Activated T-helper 2 cell treated with anti-CD3 and anti-CD28 coated beads, Interferon-gamma antibody, Interleukin-2, Interleukin-4, amounts not matched to agents 10 μg/mL and 5 μg/mL and 100 μg/mL, durations not matched to agents 14 hours and 24 hours and 36 hours (primary cell): ENCODE measurements at regions of chr9 and their contacts with region 1.

Region 1: GRCh38 chr9:93159601-93160471 is 24.1 kb upstream of the WNK2 start:
- DNase-seq: peak; percentile 60
- H3K4me3 Mint-ChIP-seq: no peak overlapping the region
- H3K27ac Mint-ChIP-seq: peak overlapping the region; percentile 53
- H3K4me1 Mint-ChIP-seq: peaks cover 22% of the 10 kb centered on the region
- H3K27me3 Mint-ChIP-seq: no peaks in the 10 kb centered on the region

Region 2: DNA sequence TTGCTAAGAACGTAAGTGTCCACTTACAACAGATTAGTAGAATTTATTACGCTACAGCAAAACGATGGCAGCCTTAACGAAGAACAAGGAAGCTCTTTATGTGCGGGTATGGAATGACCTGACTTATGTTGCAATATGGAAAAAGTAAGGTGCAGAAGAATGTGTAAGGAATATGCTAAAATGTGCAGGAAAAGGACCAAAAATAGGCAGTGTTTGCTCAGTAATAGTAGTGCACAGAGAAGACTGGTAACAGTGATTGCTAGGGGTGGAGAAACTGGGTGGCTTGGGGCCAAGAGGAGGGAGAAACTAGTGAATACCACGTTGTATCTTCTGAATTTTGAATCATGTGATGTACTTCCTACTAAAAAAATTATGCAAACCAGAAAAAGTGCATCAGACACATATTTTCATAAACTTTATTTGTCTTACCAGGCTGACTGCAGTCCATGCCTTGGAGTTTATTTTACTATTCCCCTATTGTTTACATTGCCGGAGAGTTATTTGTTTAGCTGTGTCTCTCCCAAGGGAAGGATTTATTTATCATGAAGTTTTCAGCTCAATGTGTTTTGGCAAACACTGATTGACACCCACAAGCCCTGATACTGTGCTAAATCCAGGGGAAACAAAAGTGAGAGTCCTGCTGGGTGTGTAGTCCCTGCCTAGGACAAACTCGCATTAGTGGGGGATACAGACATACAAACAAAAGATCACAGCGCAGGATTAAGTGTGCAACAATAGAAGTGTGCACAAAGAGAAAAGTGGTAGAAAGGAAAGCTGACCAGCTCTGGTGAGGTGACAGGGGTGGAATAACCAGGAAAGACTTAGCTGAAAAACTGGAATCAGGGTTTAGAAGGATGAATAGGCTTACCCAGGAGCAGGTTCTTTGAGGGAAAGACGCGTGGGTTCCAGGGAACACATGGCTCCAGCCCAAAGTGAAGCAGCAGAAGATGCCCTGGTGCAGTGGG is 248.0 kb before region 1 on chr9:
- intact Hi-C with region 1: no loop called
- DNase-seq: no peak
- H3K4me3 Mint-ChIP-seq: no peak overlapping the region
- H3K27ac Mint-ChIP-seq: no peak overlapping the region
- H3K4me1 Mint-ChIP-seq: no peaks in the 10 kb centered on the region
- H3K27me3 Mint-ChIP-seq: peaks cover 31% of the 10 kb centered on the region

Region 3: GRCh38 chr9:93302551-93303257 is 142.9 kb after region 1 on chr9:
- intact Hi-C with region 1: loop called (anchors 2 kb)
- DNase-seq: peak; percentile 29
- H3K4me3 Mint-ChIP-seq: no peak overlapping the region
- H3K27ac Mint-ChIP-seq: no peak overlapping the region
- H3K4me1 Mint-ChIP-seq: no peaks in the 10 kb centered on the region
- H3K27me3 Mint-ChIP-seq: no peaks in the 10 kb centered on the region

Region 4: DNA sequence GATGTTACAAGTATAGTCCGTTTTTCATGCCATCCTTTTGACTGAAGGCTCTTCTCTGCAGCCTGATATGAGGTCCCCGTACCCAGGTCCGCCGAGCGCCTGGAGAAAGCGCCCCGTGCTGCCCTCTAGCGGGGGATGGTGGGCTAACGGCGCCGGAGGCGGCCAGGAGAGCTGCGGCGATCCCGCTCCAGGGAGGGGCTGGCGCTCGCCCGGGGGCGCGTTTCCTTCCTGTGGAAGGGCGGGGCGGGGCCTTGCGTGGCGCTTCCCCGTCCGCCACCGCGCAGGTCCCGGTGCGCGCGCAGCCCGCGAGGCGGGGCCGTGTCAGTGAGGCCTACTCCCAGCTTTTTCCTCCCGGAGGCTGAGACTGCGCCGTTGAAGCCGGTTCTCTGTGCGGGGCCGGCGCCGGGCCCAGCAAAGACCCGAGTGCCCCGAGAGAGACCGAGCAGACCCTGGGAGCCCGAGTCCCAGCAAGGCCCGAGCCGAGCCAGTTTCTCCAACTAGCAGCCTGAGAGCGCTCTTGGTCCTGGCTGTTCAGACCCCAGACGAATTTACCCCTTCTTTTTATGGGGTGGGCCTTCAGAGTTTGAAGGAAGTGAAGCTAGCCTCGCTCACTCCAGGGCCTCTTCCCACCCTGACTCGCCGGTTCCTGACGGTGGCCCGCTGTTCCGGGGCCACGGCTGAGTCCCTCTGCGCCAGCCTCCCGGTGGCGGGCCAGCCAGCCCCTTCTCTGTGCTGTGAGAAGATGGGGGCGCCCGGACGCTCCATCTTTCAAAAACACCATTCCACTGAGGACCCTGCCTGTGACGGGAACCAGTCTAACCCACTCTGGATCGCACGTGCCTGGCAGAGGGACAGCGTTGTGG is 406.8 kb after region 1 on chr9:
- intact Hi-C with region 1: loop called (anchors 10 kb)
- DNase-seq: peak; percentile 98
- H3K4me3 Mint-ChIP-seq: peak overlapping the region; percentile 82
- H3K27ac Mint-ChIP-seq: peak overlapping the region; percentile 85
- H3K4me1 Mint-ChIP-seq: peaks cover 26% of the 10 kb centered on the region
- H3K27me3 Mint-ChIP-seq: no peaks in the 10 kb centered on the region

Region 5: DNA sequence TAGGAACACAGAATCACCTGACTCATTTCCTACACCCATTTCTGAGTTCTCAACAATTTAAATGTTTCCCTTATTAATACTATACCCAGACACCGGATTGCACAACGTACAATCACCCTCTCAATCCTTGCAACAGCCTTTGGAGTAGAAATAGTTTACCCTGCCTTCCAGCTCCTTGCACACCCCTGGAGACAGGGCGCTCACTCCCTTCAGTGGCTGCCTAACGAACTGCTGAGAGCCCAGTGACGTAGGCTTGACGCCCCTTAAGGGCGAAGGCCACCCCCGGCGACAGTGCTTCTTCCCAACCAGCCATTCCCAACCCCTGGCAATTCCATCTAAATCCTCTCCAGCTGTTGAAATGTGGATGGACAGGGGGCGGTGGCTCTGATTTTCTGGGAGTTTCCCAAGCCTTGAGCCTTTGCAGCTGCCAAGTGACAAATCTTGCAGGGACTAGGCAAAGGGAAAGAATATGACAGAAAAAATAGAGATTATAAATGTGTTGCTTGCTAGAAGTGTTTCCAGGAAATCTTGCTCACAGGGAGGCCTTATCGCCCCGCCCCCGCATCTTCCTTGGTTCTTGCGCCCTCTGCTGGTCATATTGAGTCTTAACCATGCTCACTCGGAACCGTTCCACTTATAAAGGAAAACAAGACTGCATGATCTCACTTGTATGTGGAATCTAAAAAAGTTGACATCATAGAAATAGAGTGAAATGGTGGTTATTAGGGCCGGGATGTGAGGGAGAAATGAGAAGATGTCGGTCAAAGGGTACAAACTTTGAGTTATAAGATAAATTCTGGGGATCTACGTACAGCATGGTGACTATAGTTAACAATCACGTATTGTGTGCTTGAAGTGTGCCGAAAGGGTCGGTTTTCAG is 803.0 kb after region 1 on chr9:
- intact Hi-C with region 1: loop called (anchors 10 kb)
- DNase-seq: peak; percentile 72
- H3K4me3 Mint-ChIP-seq: no peak overlapping the region
- H3K27ac Mint-ChIP-seq: peak overlapping the region; percentile 15
- H3K4me1 Mint-ChIP-seq: peaks cover 27% of the 10 kb centered on the region
- H3K27me3 Mint-ChIP-seq: peaks cover 41% of the 10 kb centered on the region